Tibial artery (tissue), 4 donors: ENCODE measurements at regions of chr3 and their contacts with region 1.

Region 1: DNA sequence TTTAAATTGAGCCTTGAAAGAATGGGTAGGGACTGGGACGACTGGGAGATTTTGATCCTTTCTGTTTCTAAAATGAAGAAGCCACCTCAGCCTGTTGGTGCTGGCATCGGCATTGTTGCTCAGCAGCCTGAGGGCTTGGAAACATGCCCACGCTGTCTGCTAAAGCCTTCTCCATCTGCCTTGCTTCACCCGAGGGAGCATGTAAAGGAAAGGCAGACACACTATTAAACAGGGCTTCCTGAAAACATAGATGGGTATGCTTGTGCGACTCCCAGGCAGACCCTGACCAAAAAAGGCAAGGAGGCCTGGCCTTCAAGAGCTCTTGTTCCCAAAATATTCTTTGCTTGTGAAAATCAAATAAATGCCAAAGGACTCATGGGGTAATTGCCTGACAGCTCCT is 84.2 kb upstream of the SLC4A7 start:
- DNase-seq: peak; percentile 74 to 84
- H3K4me3 ChIP-seq: no peak overlapping the region
- H3K27ac ChIP-seq: peak overlapping the region; percentile 79 to 80
- H3K4me1 ChIP-seq: peaks cover 0 to 61% (median 30%) of the 10 kb centered on the region in 4 donors
- H3K27me3 ChIP-seq: no peaks in the 10 kb centered on the region
- CTCF ChIP-seq: no peak

Region 2: DNA sequence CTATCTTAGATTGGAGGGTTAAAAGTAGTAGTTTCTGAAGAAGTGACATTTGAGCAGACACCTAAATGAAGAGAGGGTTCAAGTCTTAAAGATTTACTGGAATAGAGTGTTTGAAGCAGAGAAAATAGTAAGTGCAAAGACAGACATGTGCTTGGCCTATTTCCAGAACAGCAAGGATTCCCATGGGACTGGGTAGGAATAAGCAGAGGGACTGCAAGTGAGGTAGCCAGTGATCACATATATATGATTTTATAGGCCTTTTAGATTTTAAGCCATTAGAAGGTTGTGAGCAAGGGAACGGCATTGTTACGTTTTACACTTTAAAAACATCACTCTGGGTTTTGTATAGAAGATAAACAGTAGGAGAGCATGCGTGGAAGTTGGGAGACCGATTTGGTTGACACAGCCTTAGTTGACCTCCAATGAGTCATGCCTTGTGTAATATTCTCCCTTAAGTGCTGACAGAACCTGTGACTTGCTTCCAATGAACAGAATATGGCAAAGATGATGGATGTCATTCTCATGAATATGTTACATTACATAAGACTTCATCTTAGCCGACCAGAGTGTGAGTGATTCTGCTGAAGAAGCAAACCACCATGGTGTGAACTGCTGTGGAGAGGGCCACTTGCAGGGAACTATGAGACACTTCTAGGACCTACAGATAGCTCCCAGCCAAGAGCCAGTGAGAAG is 47.1 kb before region 1 on chr3:
- intact Hi-C with region 1: loop called (anchors 10 kb)
- DNase-seq: peak in 1 of 2 donors; percentile 55
- H3K4me3 ChIP-seq: no peak overlapping the region
- H3K27ac ChIP-seq: peak overlapping the region; percentile 47 to 82
- H3K4me1 ChIP-seq: peaks cover 0 to 46% (median 35%) of the 10 kb centered on the region in 4 donors
- H3K27me3 ChIP-seq: no peaks in the 10 kb centered on the region
- CTCF ChIP-seq: no peak

Region 3: DNA sequence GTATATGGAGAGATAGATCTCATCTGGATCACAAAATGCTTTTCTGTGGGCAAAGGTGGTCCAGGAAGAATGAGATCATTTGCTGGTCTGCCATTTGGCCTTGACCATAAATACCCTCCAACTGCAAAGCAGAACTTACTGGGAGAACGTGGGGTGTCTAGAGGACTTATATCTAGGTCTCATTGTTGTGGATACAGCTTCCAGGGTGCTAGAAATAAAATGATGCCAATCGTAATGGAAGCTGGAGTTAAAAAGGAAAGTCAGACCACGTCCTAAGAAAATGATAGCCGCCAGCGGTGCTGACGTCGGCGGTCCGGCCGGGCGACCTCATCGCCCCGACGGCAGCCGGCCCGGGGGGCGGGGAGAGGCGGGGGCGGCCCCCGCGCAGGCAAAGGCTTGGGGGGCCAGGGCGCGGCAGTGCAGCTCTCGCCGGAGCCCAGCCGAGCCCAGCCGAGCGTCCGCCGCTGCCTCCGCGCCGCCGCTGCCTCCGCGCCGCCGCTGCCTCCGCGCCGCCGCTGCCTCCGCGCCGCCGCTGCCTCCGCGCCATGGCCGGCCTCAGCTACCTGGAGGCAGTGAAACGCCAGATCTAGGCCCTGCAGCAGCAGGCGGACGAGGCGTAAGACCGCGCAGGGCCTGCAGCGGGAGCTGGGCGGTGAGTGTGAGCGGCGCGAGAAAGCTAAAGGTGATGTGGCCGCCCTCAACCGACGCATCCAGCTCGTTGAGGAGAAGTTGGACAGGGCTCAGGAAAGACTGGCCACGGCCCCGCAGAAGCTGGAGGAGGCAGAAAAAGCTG is 64.2 kb after region 1 on chr3:
- intact Hi-C with region 1: loop called (anchors 10 kb)
- DNase-seq: peak; percentile 28 to 71
- H3K4me3 ChIP-seq: peak overlapping the region; percentile 53 to 65
- H3K27ac ChIP-seq: peak overlapping the region; percentile 81 to 88
- H3K4me1 ChIP-seq: peaks cover 0 to 34% (median 17%) of the 10 kb centered on the region in 4 donors
- H3K27me3 ChIP-seq: no peaks in the 10 kb centered on the region
- CTCF ChIP-seq: no peak